ENCODE measurements at regions of chr5 and their contacts with region 1.

Region 1: GRCh38 chr5:6525910-6526309 is 77.3 kb downstream of the UBE2QL1 start:
- DNase-seq: peak; percentile 21
- ATAC-seq: peak; percentile 83
- H3K4me3 ChIP-seq: no peak overlapping the region
- H3K27ac ChIP-seq: no peak overlapping the region
- H3K4me1 ChIP-seq: no peaks in the 10 kb centered on the region
- H3K27me3 ChIP-seq: peaks cover 1 to 13% of the 10 kb centered on the region in 2 experiments; a peak in 1 of 5 replicates
- CTCF ChIP-seq: peak; percentile 63
- EP300 ChIP-seq: no peak
- POLR2A ChIP-seq: no peak
- RAD21 ChIP-seq: no peak

Region 2: GRCh38 chr5:6291961-6292360 is 233.9 kb before region 1 on chr5:
- CTCF ChIA-PET with region 1: interaction called, 5 read pairs
- POLR2A ChIA-PET with region 1: no interaction called
- in situ Hi-C with region 1: no loop called
- intact Hi-C with region 1: loop called (anchors 1 kb)
- DNase-seq: peak; percentile 38
- ATAC-seq: peak; percentile 75
- H3K4me3 ChIP-seq: no peak overlapping the region
- H3K27ac ChIP-seq: no peak overlapping the region
- H3K4me1 ChIP-seq: no peaks in the 10 kb centered on the region
- H3K27me3 ChIP-seq: no peaks in the 10 kb centered on the region
- CTCF ChIP-seq: peak; percentile 53
- EP300 ChIP-seq: no peak
- POLR2A ChIP-seq: no peak
- RAD21 ChIP-seq: 0 out of 2 replicates have a peak, but pooled peaks have one; percentile 12

Region 3: DNA sequence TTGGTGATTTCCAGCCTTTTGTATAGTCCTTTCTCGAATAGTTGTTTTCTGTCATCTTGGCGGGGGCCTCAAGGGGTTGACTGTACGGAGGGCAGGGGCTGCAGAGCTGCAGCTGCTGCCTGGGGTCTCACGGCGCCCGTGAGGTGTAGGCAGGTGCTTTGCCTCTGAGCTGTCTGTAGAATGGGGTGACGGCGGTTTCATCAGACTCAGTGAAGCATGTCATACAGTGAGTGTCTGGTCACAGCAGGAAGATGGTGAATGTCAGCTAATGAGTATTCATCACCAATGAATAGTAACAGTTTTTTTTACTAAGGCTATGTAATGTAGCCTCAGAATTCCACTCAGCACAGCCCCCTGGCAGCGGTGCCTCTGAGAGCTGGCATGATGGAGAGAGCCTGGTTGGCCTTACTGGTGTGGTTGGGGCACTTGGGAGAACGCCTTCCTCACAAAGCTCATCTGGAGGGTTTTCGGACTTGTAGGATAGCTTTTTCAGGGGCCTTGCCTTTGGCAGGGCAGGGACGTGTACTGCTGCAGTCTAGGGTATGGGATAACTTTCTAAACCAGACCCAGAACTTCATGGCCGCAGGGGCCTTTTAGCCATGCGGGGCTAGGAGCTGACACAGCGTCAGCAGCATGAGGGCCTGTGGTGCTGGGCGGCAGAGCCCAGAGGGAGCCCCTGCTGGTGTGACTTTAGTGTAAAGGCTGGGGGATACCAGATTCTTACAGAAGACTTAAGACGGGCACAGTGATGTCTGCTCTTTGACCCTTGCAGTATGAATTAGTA is 202.3 kb after region 1 on chr5:
- CTCF ChIA-PET with region 1: no interaction called
- POLR2A ChIA-PET with region 1: no interaction called
- in situ Hi-C with region 1: no loop called
- intact Hi-C with region 1: no loop called
- DNase-seq: no peak
- ATAC-seq: no peak
- H3K4me3 ChIP-seq: no peak overlapping the region
- H3K27ac ChIP-seq: no peak overlapping the region
- H3K4me1 ChIP-seq: peaks cover 36% of the 10 kb centered on the region
- H3K27me3 ChIP-seq: no peaks in the 10 kb centered on the region
- CTCF ChIP-seq: no peak
- EP300 ChIP-seq: no peak
- POLR2A ChIP-seq: no peak
- RAD21 ChIP-seq: no peak